ENCODE measurements at regions of chr9 and their contacts with region 1.

Region 1: GRCh38 chr9:95750725-95751517 is 124.6 kb upstream of the ERCC6L2 start:
- DNase-seq: peak; percentile 34 to 73 (median 45)
- H3K4me3 ChIP-seq: no peak overlapping the region
- H3K4me3 Mint-ChIP-seq: peak overlapping the region; percentile 6 to 82 (median 62)
- H3K27ac ChIP-seq: no peak overlapping the region
- H3K27ac Mint-ChIP-seq: no peak overlapping the region
- H3K4me1 ChIP-seq: peaks cover 29% of the 10 kb centered on the region
- H3K4me1 Mint-ChIP-seq: peaks cover 8 to 20% (median 14%) of the 10 kb centered on the region in 4 donors
- H3K27me3 ChIP-seq: no peaks in the 10 kb centered on the region
- H3K27me3 Mint-ChIP-seq: peaks cover 0 to 8% of the 10 kb centered on the region in 2 donors

Region 2: DNA sequence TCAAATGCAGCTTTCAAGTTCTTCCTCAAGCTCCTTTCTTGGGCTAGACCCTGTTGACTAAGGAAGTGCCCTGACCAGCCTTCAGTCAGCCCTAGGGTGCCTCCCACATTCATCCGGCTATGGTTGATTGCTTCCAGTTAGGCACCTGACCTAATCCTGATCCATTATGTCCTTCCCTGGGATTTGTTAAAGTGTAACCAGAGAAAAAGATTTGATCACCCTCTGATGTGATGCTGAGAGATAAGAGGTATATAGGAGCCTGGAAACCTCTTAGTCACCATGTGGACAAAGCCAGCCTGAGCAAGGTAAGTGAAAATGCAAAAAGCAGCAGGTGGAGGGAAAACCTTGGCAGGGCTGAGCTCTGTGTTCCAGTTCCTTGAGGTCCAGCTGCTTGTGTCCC is 54.2 kb before region 1 on chr9:
- CTCF ChIA-PET with region 1: no interaction called
- POLR2A ChIA-PET with region 1: no interaction called
- intact Hi-C with region 1: no loop called
- DNase-seq: no peak
- H3K4me3 ChIP-seq: no peak overlapping the region
- H3K4me3 Mint-ChIP-seq: no peak overlapping the region
- H3K27ac ChIP-seq: no peak overlapping the region
- H3K27ac Mint-ChIP-seq: no peak overlapping the region
- H3K4me1 ChIP-seq: no peaks in the 10 kb centered on the region
- H3K4me1 Mint-ChIP-seq: no peaks in the 10 kb centered on the region
- H3K27me3 ChIP-seq: no peaks in the 10 kb centered on the region
- H3K27me3 Mint-ChIP-seq: peaks cover 0 to 2% of the 10 kb centered on the region in 2 donors

Region 3: GRCh38 chr9:95724253-95724991 is 26.5 kb before region 1 on chr9:
- CTCF ChIA-PET with region 1: interaction called, 3 read pairs
- POLR2A ChIA-PET with region 1: no interaction called
- intact Hi-C with region 1: loop called (anchors 1 kb)
- DNase-seq: peak; percentile 84 to 93 (median 89)
- H3K4me3 ChIP-seq: no peak overlapping the region
- H3K4me3 Mint-ChIP-seq: peak overlapping the region; percentile 8 to 73 (median 40)
- H3K27ac ChIP-seq: no peak overlapping the region
- H3K27ac Mint-ChIP-seq: peak overlapping the region; percentile 69 to 92 (median 88)
- H3K4me1 ChIP-seq: peaks cover 34% of the 10 kb centered on the region
- H3K4me1 Mint-ChIP-seq: peaks cover 29 to 49% (median 33%) of the 10 kb centered on the region in 4 donors
- H3K27me3 ChIP-seq: no peaks in the 10 kb centered on the region
- H3K27me3 Mint-ChIP-seq: peaks cover 0 to 2% of the 10 kb centered on the region in 2 donors

Region 4: DNA sequence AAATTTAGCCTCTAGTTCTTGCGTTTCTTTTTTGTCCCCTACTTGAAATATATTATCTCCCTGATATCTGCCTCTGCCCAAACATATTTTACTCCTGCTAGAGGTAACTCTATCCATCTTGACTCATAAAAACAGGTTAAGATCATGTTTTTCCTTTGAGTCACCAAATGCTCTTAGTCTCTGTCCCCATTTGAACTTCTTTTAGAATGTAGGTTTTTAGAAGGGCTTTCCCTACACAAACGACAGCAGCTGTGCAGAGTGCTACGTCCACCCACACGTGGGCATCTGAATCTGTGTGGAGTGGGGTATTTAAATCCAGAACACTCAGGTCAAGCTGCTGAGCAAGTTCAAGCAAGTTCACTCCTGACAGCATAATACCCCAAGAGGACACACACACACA is 548.9 kb after region 1 on chr9:
- CTCF ChIA-PET with region 1: no interaction called
- POLR2A ChIA-PET with region 1: no interaction called
- intact Hi-C with region 1: no loop called
- DNase-seq: no peak
- H3K4me3 ChIP-seq: no peak overlapping the region
- H3K4me3 Mint-ChIP-seq: no peak overlapping the region
- H3K27ac ChIP-seq: no peak overlapping the region
- H3K27ac Mint-ChIP-seq: no peak overlapping the region
- H3K4me1 ChIP-seq: no peaks in the 10 kb centered on the region
- H3K4me1 Mint-ChIP-seq: no peaks in the 10 kb centered on the region
- H3K27me3 ChIP-seq: no peaks in the 10 kb centered on the region
- H3K27me3 Mint-ChIP-seq: no peaks in the 10 kb centered on the region

Measured in CD4-positive, alpha-beta memory T cell (primary cell).